AG04450 (cell line): ENCODE measurements at regions of chr4 and their contacts with region 1.

Region 1: GRCh38 chr4:177047070-177047850 is 254.5 kb upstream of the VEGFC start:
- DNase-seq: peak; percentile 59
- H3K4me3 ChIP-seq: no peak overlapping the region
- H3K27ac ChIP-seq: no peak overlapping the region
- H3K27me3 ChIP-seq: no peaks in the 10 kb centered on the region
- CTCF ChIP-seq: peak; percentile 88

Region 2: DNA sequence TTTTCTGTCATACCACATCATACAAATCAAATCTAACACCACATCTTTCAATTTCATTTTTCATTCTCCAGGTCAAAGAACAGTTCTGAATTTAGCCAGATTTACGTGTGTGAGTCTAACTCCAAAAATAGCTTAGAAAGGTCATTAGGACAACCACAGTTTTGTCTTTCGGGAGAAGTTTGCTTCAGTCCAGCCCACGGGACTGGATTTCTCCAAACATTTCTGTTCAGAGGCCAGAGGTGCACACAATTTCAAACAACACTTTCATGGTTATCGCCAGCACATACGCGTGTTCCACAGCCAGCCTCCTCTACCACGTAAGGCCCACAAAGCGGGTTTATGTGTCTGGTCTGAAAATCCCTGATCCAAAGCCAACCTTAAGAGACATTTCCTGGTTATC is 320.5 kb before region 1 on chr4:
- CTCF ChIA-PET with region 1: interaction called, 18 read pairs
- POLR2A ChIA-PET with region 1: no interaction called
- DNase-seq: peak; percentile 87
- H3K4me3 ChIP-seq: no peak overlapping the region
- H3K27ac ChIP-seq: peak overlapping the region; percentile 49
- H3K27me3 ChIP-seq: no peaks in the 10 kb centered on the region
- CTCF ChIP-seq: no peak

Region 3: GRCh38 chr4:176778491-176778890 is 268.8 kb before region 1 on chr4:
- CTCF ChIA-PET with region 1: interaction called, 15 read pairs
- POLR2A ChIA-PET with region 1: no interaction called
- DNase-seq: no peak
- H3K4me3 ChIP-seq: no peak overlapping the region
- H3K27ac ChIP-seq: no peak overlapping the region
- H3K27me3 ChIP-seq: no peaks in the 10 kb centered on the region
- CTCF ChIP-seq: no peak

Region 4: DNA sequence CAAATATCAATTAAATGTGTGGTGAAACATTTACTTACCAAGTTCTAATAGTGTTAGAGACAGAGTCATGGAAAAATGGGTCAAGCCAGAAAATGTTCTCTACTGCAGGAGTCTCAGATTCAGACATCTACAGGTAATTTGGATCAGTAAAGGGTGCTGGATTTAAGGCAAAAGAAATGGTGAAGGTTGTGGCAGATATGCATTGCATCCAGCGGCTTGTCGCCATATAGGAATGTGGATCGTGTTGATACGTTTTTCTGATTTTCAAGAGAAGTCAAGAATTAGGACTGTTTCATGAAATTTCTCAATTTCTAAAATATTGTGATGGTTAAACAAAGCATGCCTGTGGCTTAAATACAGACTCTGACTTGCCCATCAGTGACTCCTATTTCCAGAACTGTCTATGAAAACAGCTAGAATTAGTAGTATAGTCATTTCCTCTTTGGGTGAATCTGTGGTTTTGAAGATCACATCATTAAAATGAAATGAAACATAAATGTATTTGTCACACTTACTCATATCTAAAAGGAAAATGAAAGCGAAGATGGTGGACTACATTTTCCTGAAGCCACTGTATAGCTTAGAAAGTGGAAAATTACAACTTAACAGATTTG is 144.4 kb before region 1 on chr4:
- CTCF ChIA-PET with region 1: interaction called, 10 read pairs
- POLR2A ChIA-PET with region 1: interaction called, 3 read pairs
- DNase-seq: peak; percentile 62
- H3K4me3 ChIP-seq: peak overlapping the region; percentile 30; the same call in 1 of the 2 replicates
- H3K27ac ChIP-seq: peak overlapping the region; percentile 47
- H3K27me3 ChIP-seq: no peaks in the 10 kb centered on the region
- CTCF ChIP-seq: no peak

Region 5: GRCh38 chr4:177012918-177013545 is 34.2 kb before region 1 on chr4:
- CTCF ChIA-PET with region 1: interaction called, 10 read pairs
- POLR2A ChIA-PET with region 1: no interaction called
- DNase-seq: no peak
- H3K4me3 ChIP-seq: no peak overlapping the region
- H3K27ac ChIP-seq: no peak overlapping the region
- H3K27me3 ChIP-seq: no peaks in the 10 kb centered on the region
- CTCF ChIP-seq: no peak

Region 6: GRCh38 chr4:177087060-177087459 is 39.8 kb after region 1 on chr4:
- CTCF ChIA-PET with region 1: interaction called, 22 read pairs
- POLR2A ChIA-PET with region 1: no interaction called
- DNase-seq: no peak
- H3K4me3 ChIP-seq: no peak overlapping the region
- H3K27ac ChIP-seq: no peak overlapping the region
- H3K27me3 ChIP-seq: no peaks in the 10 kb centered on the region
- CTCF ChIP-seq: no peak

Region 7: GRCh38 chr4:177283167-177283566 is 235.9 kb after region 1 on chr4:
- CTCF ChIA-PET with region 1: no interaction called
- POLR2A ChIA-PET with region 1: no interaction called
- DNase-seq: no peak
- H3K4me3 ChIP-seq: no peak overlapping the region
- H3K27ac ChIP-seq: no peak overlapping the region
- H3K27me3 ChIP-seq: no peaks in the 10 kb centered on the region
- CTCF ChIP-seq: no peak

Region 8: DNA sequence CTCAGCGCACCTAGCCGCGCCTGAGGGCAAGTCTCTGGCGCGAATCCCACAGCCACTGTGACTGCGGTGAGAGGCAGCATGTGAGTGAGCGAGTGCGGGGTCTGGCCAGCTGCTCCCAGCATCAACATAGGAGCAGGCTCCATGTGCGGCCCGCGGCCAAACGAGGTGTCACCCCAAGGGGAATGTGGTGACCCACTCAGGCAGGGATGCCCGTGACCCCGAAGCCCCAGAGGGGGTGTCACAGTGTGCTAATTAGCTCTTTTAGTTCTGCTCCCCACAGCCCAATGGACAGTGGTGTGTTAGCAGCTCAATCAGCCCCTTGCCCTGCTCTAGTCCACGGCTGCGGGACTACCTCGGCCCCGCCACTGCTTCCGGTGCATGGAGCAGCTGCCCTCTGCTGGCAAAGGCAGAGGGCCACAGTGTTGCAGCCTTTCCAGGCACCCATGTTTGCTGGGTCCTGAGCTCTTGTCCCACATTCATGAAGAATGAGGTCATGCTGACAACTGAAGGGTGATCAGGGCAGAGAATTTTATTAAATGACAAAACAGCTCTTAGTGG is 333.5 kb after region 1 on chr4:
- CTCF ChIA-PET with region 1: no interaction called
- POLR2A ChIA-PET with region 1: no interaction called
- DNase-seq: no peak
- H3K4me3 ChIP-seq: no peak overlapping the region
- H3K27ac ChIP-seq: no peak overlapping the region
- H3K27me3 ChIP-seq: no peaks in the 10 kb centered on the region
- CTCF ChIP-seq: no peak